ENCODE measurements at regions of chr9 and their contacts with region 1.

Region 1: DNA sequence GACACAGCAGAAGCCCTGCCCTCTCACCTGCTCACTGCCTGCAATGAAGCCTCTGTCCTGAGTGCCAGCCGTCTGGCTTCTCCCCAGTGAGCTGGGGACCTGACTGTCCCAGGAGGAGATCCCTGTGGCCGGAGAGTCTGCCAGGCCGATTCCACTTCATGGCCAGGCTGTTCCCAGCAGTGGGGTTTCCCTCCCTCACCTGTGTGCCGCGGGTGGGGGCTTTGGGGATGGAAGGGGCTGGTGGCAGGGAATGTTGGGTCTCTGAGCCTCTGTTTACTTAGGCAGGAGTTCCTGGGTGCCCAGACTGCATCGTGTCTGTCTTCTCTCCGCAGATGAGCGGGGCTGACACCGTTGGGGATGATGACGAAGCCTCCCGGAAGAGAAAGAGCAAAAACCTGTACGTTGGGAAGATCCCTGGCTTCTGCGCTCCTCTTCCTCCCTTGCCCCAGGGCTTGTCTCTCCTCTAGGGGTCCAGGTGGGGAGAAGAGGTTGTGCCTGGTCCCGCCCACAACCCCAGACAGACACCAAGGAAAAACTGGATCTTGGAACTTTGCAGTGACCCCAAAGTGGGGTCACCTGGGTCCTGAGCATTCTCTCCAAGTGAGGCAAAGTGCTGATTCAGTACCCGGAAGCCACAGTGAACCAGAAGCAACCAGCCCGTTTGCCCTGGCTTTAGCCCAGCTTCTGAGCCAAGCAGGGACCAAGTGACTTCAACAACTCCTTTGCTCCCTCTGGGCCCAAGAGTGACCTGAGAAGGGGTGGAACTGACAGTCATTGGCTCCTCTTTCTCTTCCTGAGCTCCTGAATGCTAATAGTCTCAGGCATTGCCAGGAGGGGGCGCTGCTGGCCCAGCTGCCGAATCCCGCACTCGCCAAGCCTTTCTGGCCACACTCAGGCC is 127.7 kb downstream of the RGS3 start:
- DNase-seq: peak; percentile 75 to 83
- H3K4me3 ChIP-seq: no peak overlapping the region
- H3K4me3 Mint-ChIP-seq: no peak overlapping the region
- H3K27ac Mint-ChIP-seq: no peak overlapping the region
- H3K4me1 ChIP-seq: no peaks in the 10 kb centered on the region
- H3K4me1 Mint-ChIP-seq: no peaks in the 10 kb centered on the region
- H3K27me3 ChIP-seq: no peaks in the 10 kb centered on the region
- H3K27me3 Mint-ChIP-seq: no peaks in the 10 kb centered on the region
- CTCF ChIP-seq: peak; percentile 84 to 92

Region 2: GRCh38 chr9:113446323-113446740 is 144.9 kb before region 1 on chr9:
- CTCF ChIA-PET with region 1: interaction called, 13 read pairs
- POLR2A ChIA-PET with region 1: no interaction called
- intact Hi-C with region 1: loop called (anchors 2 kb)
- DNase-seq: peak in 1 of 2 experiments; percentile 49
- H3K4me3 ChIP-seq: no peak overlapping the region
- H3K4me3 Mint-ChIP-seq: no peak overlapping the region
- H3K27ac Mint-ChIP-seq: no peak overlapping the region
- H3K4me1 ChIP-seq: 0 out of 2 replicates have a peak, but pooled peaks cover 3% of the 10 kb centered on the region
- H3K4me1 Mint-ChIP-seq: peaks cover 6% of the 10 kb centered on the region
- H3K27me3 ChIP-seq: no peaks in the 10 kb centered on the region
- H3K27me3 Mint-ChIP-seq: no peaks in the 10 kb centered on the region
- CTCF ChIP-seq: peak; percentile 11 to 48

Region 3: GRCh38 chr9:113468716-113469448 is 122.4 kb before region 1 on chr9:
- CTCF ChIA-PET with region 1: no interaction called
- POLR2A ChIA-PET with region 1: interaction called, 3 read pairs
- intact Hi-C with region 1: loop called (anchors 5 kb)
- DNase-seq: no peak
- H3K4me3 ChIP-seq: no peak overlapping the region
- H3K4me3 Mint-ChIP-seq: no peak overlapping the region
- H3K27ac Mint-ChIP-seq: no peak overlapping the region
- H3K4me1 ChIP-seq: peaks cover 21% of the 10 kb centered on the region
- H3K4me1 Mint-ChIP-seq: peaks cover 22% of the 10 kb centered on the region
- H3K27me3 ChIP-seq: no peaks in the 10 kb centered on the region
- H3K27me3 Mint-ChIP-seq: no peaks in the 10 kb centered on the region
- CTCF ChIP-seq: no peak

Region 4: DNA sequence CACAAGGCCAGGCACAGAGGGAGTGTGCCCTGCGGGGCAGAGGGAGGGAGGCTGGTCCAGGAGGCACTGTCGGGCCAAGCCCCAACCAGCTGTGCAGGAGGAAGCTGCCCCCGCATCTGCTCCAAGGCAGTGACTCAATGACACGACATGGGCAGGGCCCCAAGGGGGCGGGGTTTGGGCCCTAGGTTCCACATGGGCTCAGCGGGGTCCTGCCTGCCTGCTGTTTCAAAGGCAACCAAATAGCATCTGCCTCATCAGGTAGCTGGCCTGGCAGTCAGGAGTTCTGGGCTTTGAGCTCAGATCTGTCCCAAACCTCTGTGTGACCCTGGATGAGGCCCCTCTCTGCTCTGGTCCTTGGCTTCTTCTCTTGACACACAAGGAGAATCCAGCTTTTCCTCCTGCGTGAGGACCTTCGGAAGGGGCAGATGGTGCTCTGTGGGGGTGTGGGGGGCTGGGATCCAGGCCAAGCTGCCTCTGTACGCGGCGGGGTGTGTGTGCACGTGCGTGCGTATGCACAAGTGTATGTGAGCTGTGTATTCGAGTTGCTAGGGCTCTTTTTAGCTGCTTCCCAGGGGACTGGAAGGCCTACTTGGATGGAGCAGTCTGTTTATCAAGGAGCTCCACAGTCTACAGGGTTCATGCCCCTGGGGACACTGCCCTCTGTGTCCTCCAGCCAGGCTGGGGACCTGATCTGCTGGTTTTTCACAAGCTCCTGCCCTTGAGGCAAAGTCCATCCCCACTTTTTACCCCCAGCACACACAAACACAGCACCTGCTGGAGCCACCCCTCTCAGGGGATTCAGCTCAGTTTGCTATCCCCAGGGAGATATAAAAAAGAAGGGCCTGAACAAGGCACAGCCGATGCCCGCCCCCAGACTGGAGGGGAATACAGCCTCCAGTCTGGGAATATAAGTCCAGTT is 11.1 kb after region 1 on chr9:
- CTCF ChIA-PET with region 1: interaction called, 26 read pairs
- POLR2A ChIA-PET with region 1: no interaction called
- intact Hi-C with region 1: no loop called
- DNase-seq: peak; percentile 71 to 81
- H3K4me3 ChIP-seq: no peak overlapping the region
- H3K4me3 Mint-ChIP-seq: no peak overlapping the region
- H3K27ac Mint-ChIP-seq: peak overlapping the region; percentile 79
- H3K4me1 ChIP-seq: peaks cover 17% of the 10 kb centered on the region
- H3K4me1 Mint-ChIP-seq: peaks cover 22% of the 10 kb centered on the region
- H3K27me3 ChIP-seq: no peaks in the 10 kb centered on the region
- H3K27me3 Mint-ChIP-seq: no peaks in the 10 kb centered on the region
- CTCF ChIP-seq: no peak

Region 5: GRCh38 chr9:113648586-113649453 is 57.6 kb after region 1 on chr9:
- CTCF ChIA-PET with region 1: interaction called, 191 read pairs
- POLR2A ChIA-PET with region 1: no interaction called
- intact Hi-C with region 1: no loop called
- DNase-seq: no peak
- H3K4me3 ChIP-seq: no peak overlapping the region
- H3K4me3 Mint-ChIP-seq: no peak overlapping the region
- H3K27ac Mint-ChIP-seq: no peak overlapping the region
- H3K4me1 ChIP-seq: no peaks in the 10 kb centered on the region; the same call in 1 of the 2 replicates
- H3K4me1 Mint-ChIP-seq: no peaks in the 10 kb centered on the region
- H3K27me3 ChIP-seq: no peaks in the 10 kb centered on the region
- H3K27me3 Mint-ChIP-seq: peaks cover 6% of the 10 kb centered on the region
- CTCF ChIP-seq: no peak

Region 6: GRCh38 chr9:113657703-113658544 is 66.7 kb after region 1 on chr9:
- CTCF ChIA-PET with region 1: interaction called, 191 read pairs
- POLR2A ChIA-PET with region 1: no interaction called
- intact Hi-C with region 1: loop called (anchors 1 kb)
- DNase-seq: peak; percentile 84 to 87
- H3K4me3 ChIP-seq: no peak overlapping the region
- H3K4me3 Mint-ChIP-seq: no peak overlapping the region
- H3K27ac Mint-ChIP-seq: no peak overlapping the region
- H3K4me1 ChIP-seq: no peaks in the 10 kb centered on the region; the same call in 1 of the 2 replicates
- H3K4me1 Mint-ChIP-seq: no peaks in the 10 kb centered on the region
- H3K27me3 ChIP-seq: no peaks in the 10 kb centered on the region
- H3K27me3 Mint-ChIP-seq: peaks cover 7% of the 10 kb centered on the region
- CTCF ChIP-seq: peak; percentile 93 to 97

Region 7: GRCh38 chr9:113913426-113914195 is 322.4 kb after region 1 on chr9:
- CTCF ChIA-PET with region 1: no interaction called
- POLR2A ChIA-PET with region 1: no interaction called
- intact Hi-C with region 1: no loop called
- DNase-seq: no peak
- H3K4me3 ChIP-seq: no peak overlapping the region
- H3K4me3 Mint-ChIP-seq: no peak overlapping the region
- H3K27ac Mint-ChIP-seq: no peak overlapping the region
- H3K4me1 ChIP-seq: no peaks in the 10 kb centered on the region
- H3K4me1 Mint-ChIP-seq: no peaks in the 10 kb centered on the region
- H3K27me3 ChIP-seq: no peaks in the 10 kb centered on the region
- H3K27me3 Mint-ChIP-seq: no peaks in the 10 kb centered on the region
- CTCF ChIP-seq: no peak